Colonic mucosa (tissue), 4 donors: ENCODE measurements at regions of chr19 and their contacts with region 1.

Region 1: GRCh38 chr19:21698215-21698614 is 69.2 kb downstream of the ZNF100 start:
- DNase-seq: peak; percentile 25
- H3K4me3 ChIP-seq: no peak overlapping the region
- H3K27ac ChIP-seq: no peak overlapping the region
- H3K4me1 ChIP-seq: no peaks in the 10 kb centered on the region
- H3K27me3 ChIP-seq: no peaks in the 10 kb centered on the region
- CTCF ChIP-seq: peak; percentile 61

Region 2: GRCh38 chr19:21202865-21203494 is 495.2 kb before region 1 on chr19:
- intact Hi-C with region 1: loop called (anchors 10 kb)
- DNase-seq: no peak
- H3K4me3 ChIP-seq: no peak overlapping the region
- H3K27ac ChIP-seq: no peak overlapping the region
- H3K4me1 ChIP-seq: no peaks in the 10 kb centered on the region
- H3K27me3 ChIP-seq: no peaks in the 10 kb centered on the region
- CTCF ChIP-seq: peak; percentile 24

Region 3: DNA sequence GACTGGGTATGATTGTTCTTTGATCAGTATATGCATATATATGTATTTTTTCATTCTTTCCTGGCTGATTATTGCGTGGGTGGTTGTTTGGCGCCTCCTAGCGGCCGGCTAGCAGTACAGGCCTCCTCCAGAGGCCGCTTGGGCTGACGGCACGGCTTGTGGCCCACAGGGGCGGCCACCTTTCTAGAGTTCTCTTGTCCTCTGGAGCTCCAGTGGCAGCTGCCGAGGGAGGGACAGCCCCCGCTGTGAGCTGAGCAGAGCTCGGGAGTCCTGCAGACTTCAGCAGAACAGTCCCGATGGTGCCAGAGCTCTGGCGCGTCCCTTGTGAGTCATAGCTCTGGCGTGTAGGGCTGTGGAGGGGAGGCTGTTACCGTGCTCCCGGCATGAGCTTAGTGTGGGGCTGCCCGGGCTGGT is 215.3 kb before region 1 on chr19:
- intact Hi-C with region 1: loop called (anchors 10 kb)
- DNase-seq: peak; percentile 45
- H3K4me3 ChIP-seq: no peak overlapping the region
- H3K27ac ChIP-seq: no peak overlapping the region
- H3K4me1 ChIP-seq: no peaks in the 10 kb centered on the region
- H3K27me3 ChIP-seq: no peaks in the 10 kb centered on the region
- CTCF ChIP-seq: peak; percentile 64

Region 4: GRCh38 chr19:21569494-21569865 is 128.7 kb before region 1 on chr19:
- intact Hi-C with region 1: no loop called
- DNase-seq: peak; percentile 57
- H3K4me3 ChIP-seq: no peak overlapping the region
- H3K27ac ChIP-seq: peak overlapping the region; percentile 24
- H3K4me1 ChIP-seq: no peaks in the 10 kb centered on the region
- H3K27me3 ChIP-seq: no peaks in the 10 kb centered on the region
- CTCF ChIP-seq: no peak

Region 5: DNA sequence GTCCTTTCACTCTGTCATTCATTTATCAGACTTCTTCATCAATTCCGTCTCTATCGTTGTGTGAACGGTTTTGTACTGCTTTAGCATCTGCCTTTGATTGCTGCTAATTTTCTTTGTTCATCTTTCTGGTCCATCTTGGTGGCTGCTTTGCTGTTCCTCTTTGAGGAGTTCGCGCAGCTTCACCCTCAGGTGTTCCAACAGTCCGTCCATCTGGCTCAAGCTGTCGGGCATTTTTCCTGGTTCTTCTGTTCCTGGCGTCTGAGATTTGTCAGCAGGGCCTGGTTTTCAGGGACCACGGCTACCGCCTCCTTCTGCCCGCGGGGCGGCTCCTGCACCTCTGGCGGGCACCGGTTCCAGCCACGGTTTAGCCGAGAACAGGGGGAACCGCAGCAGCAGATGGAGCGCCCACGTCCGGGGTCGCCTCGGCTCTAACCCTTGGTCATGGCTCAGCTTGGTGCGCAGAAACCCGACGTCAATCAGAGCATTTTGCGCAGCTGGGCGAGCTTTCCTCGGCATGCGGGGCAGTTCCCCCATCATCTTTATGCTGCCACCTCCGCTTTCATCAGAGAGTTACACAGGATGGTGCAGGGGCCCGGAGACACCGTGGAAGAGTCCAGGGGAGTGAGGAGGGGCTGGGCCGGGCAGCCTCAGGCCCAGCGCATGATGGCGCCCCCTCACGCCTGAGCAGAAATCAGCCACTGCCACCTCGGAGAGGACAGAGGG is 20.4 kb before region 1 on chr19:
- intact Hi-C with region 1: no loop called
- DNase-seq: no peak
- H3K4me3 ChIP-seq: no peak overlapping the region
- H3K27ac ChIP-seq: no peak overlapping the region
- H3K4me1 ChIP-seq: no peaks in the 10 kb centered on the region
- H3K27me3 ChIP-seq: no peaks in the 10 kb centered on the region
- CTCF ChIP-seq: no peak